ENCODE measurements at regions of chr6 and their contacts with region 1.

Region 1: GRCh38 chr6:17957498-17957897 is 29.9 kb downstream of the KIF13A start:
- DNase-seq: peak in 1 of 4 experiments; percentile 67
- ATAC-seq: peak; percentile 40
- H3K4me3 ChIP-seq: no peak overlapping the region
- H3K27ac ChIP-seq: peak overlapping the region; percentile 2; the same call in 1 of the 3 replicates
- H3K4me1 ChIP-seq: peaks cover 13 to 32% of the 10 kb centered on the region in 2 experiments
- H3K27me3 ChIP-seq: no peaks in the 10 kb centered on the region
- CTCF ChIP-seq: no peak
- EP300 ChIP-seq: no peak
- POLR2A ChIP-seq: no peak
- RAD21 ChIP-seq: 0 out of 4 replicates have a peak, but pooled peaks of 1 of the 2 experiments have one; percentile 3

Region 2: GRCh38 chr6:17945111-17945510 is 12.4 kb before region 1 on chr6:
- CTCF ChIA-PET with region 1: no interaction called
- POLR2A ChIA-PET with region 1: interaction called, 12 read pairs
- in situ Hi-C with region 1: no loop called
- intact Hi-C with region 1: no loop called
- DNase-seq: no peak
- ATAC-seq: no peak
- H3K4me3 ChIP-seq: no peak overlapping the region
- H3K27ac ChIP-seq: no peak overlapping the region
- H3K4me1 ChIP-seq: no peaks in the 10 kb centered on the region; a peak in 1 of 5 replicates
- H3K27me3 ChIP-seq: no peaks in the 10 kb centered on the region
- CTCF ChIP-seq: no peak
- EP300 ChIP-seq: no peak
- POLR2A ChIP-seq: no peak
- RAD21 ChIP-seq: no peak